ENCODE measurements at regions of chr7 and their contacts with region 1.

Region 1: GRCh38 chr7:151448261-151449252 is 8.6 kb upstream of the CRYGN start:
- DNase-seq: peak; percentile 67 to 87 (median 83)
- ATAC-seq: peak; percentile 92
- H3K4me3 ChIP-seq: peak overlapping the region; percentile 68
- H3K4me3 Mint-ChIP-seq: peak overlapping the region; percentile 69 to 88 (median 80)
- H3K27ac ChIP-seq: peak overlapping the region; percentile 64
- H3K27ac Mint-ChIP-seq: peak overlapping the region in 6 of 9 donors; percentile 28 to 88 (median 42)
- H3K4me1 ChIP-seq: peaks cover 0 to 3% of the 10 kb centered on the region in 2 donors
- H3K4me1 Mint-ChIP-seq: peaks cover 0 to 32% (median 8%) of the 10 kb centered on the region in 7 donors
- H3K27me3 ChIP-seq: no peaks in the 10 kb centered on the region
- H3K27me3 Mint-ChIP-seq: peaks cover 0 to 23% (median 4%) of the 10 kb centered on the region in 5 donors

Region 2: DNA sequence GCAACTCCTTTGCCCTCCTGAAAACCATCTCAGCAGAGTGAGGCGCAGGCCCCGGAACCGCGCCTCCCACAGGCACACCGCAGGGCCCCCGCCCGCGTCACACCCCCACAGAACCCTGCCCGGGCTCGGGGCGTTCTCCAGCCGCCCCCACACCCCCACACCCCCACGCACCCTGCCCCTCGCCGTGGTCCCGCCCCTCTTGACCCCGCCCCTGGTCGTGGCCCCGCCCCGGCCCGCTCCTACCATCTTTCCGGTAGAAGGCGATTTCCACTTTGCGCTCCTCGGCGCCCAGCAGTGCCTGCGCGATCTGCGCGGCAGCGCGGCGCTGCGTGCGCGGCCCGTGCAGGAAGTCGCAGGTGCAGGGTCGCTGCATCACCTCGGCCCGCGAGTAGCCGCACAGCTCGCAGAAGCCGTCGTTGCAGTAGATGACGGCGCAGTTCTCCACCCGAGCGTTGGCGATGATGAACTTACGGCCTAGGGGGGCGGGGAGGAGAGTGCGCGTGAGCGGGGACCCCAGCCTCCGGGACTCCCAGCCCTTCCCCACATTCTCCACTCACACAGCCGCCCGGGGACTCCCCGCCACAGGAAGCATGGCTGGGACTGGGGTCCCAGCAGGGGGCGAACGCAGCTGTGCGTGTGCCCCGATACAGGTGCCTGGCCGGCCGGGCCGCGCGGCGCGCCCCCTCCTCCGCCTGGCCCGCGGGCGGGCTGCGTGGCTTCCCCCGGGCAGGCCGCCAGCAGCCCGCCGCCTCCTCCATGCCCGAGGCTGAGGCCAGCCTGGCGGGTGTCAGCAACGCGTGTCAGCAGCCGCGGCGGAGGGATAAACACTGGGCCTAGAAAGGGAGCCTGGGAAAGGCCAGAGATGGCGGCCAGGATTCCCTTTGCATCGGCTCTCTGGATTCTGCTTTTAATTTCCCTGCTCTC is 473.8 kb before region 1 on chr7:
- CTCF ChIA-PET with region 1: no interaction called
- POLR2A ChIA-PET with region 1: no interaction called
- intact Hi-C with region 1: no loop called
- DNase-seq: peak; percentile 63 to 84 (median 80)
- ATAC-seq: peak; percentile 85
- H3K4me3 ChIP-seq: peak overlapping the region; percentile 63
- H3K4me3 Mint-ChIP-seq: peak overlapping the region; percentile 85 to 92 (median 88)
- H3K27ac ChIP-seq: peak overlapping the region; percentile 73
- H3K27ac Mint-ChIP-seq: peak overlapping the region; percentile 59 to 97 (median 95)
- H3K4me1 ChIP-seq: peaks cover 20 to 47% of the 10 kb centered on the region in 2 donors
- H3K4me1 Mint-ChIP-seq: peaks cover 33 to 62% (median 55%) of the 10 kb centered on the region in 7 donors
- H3K27me3 ChIP-seq: peaks cover 7 to 13% of the 10 kb centered on the region in 2 donors
- H3K27me3 Mint-ChIP-seq: peaks cover 9 to 36% (median 25%) of the 10 kb centered on the region in 5 donors

Region 3: GRCh38 chr7:151315038-151315655 is 133.4 kb before region 1 on chr7:
- CTCF ChIA-PET with region 1: interaction called, 45 read pairs
- POLR2A ChIA-PET with region 1: interaction called, 5 read pairs
- intact Hi-C with region 1: loop called (anchors 1 kb)
- DNase-seq: peak; percentile 48 to 87 (median 82)
- ATAC-seq: peak; percentile 96
- H3K4me3 ChIP-seq: no peak overlapping the region
- H3K4me3 Mint-ChIP-seq: peak overlapping the region in 8 of 10 donors; percentile 1 to 80 (median 56)
- H3K27ac ChIP-seq: no peak overlapping the region
- H3K27ac Mint-ChIP-seq: peak overlapping the region in 6 of 9 donors; percentile 33 to 81 (median 58)
- H3K4me1 ChIP-seq: no peaks in the 10 kb centered on the region
- H3K4me1 Mint-ChIP-seq: peaks cover 0 to 11% (median 5%) of the 10 kb centered on the region in 7 donors
- H3K27me3 ChIP-seq: no peaks in the 10 kb centered on the region
- H3K27me3 Mint-ChIP-seq: no peaks in the 10 kb centered on the region

Region 4: GRCh38 chr7:151368136-151368571 is 80.4 kb before region 1 on chr7:
- CTCF ChIA-PET with region 1: interaction called, 130 read pairs
- POLR2A ChIA-PET with region 1: interaction called, 6 read pairs
- intact Hi-C with region 1: loop called (anchors 1 kb)
- DNase-seq: peak; percentile 55 to 80 (median 69)
- ATAC-seq: peak; percentile 99
- H3K4me3 ChIP-seq: no peak overlapping the region
- H3K4me3 Mint-ChIP-seq: no peak overlapping the region
- H3K27ac ChIP-seq: no peak overlapping the region
- H3K27ac Mint-ChIP-seq: peak overlapping the region in 2 of 9 donors; percentile 46 to 56
- H3K4me1 ChIP-seq: peaks cover 0 to 4% of the 10 kb centered on the region in 2 donors
- H3K4me1 Mint-ChIP-seq: peaks cover 3 to 29% (median 12%) of the 10 kb centered on the region in 7 donors
- H3K27me3 ChIP-seq: no peaks in the 10 kb centered on the region
- H3K27me3 Mint-ChIP-seq: no peaks in the 10 kb centered on the region

Region 5: GRCh38 chr7:151408839-151409666 is 39.5 kb before region 1 on chr7:
- CTCF ChIA-PET with region 1: no interaction called
- POLR2A ChIA-PET with region 1: no interaction called
- intact Hi-C with region 1: loop called (anchors 2 to 5 kb)
- DNase-seq: peak in 8 of 9 donors; percentile 23 to 71 (median 64)
- ATAC-seq: peak; percentile 88
- H3K4me3 ChIP-seq: peak overlapping the region; percentile 51
- H3K4me3 Mint-ChIP-seq: peak overlapping the region; percentile 67 to 88 (median 78)
- H3K27ac ChIP-seq: no peak overlapping the region
- H3K27ac Mint-ChIP-seq: peak overlapping the region in 6 of 9 donors; percentile 8 to 81 (median 52)
- H3K4me1 ChIP-seq: peaks cover 11 to 24% of the 10 kb centered on the region in 2 donors
- H3K4me1 Mint-ChIP-seq: peaks cover 11 to 24% (median 15%) of the 10 kb centered on the region in 7 donors
- H3K27me3 ChIP-seq: peaks cover 0 to 8% of the 10 kb centered on the region in 2 donors
- H3K27me3 Mint-ChIP-seq: peaks cover 19 to 63% (median 27%) of the 10 kb centered on the region in 5 donors

Region 6: GRCh38 chr7:151648429-151648828 is 199.9 kb after region 1 on chr7:
- CTCF ChIA-PET with region 1: no interaction called
- POLR2A ChIA-PET with region 1: no interaction called
- intact Hi-C with region 1: no loop called
- DNase-seq: no peak
- ATAC-seq: no peak
- H3K4me3 ChIP-seq: no peak overlapping the region
- H3K4me3 Mint-ChIP-seq: no peak overlapping the region
- H3K27ac ChIP-seq: no peak overlapping the region
- H3K27ac Mint-ChIP-seq: no peak overlapping the region
- H3K4me1 ChIP-seq: no peaks in the 10 kb centered on the region
- H3K4me1 Mint-ChIP-seq: peaks cover 0 to 6% (median 0%) of the 10 kb centered on the region in 7 donors
- H3K27me3 ChIP-seq: no peaks in the 10 kb centered on the region
- H3K27me3 Mint-ChIP-seq: no peaks in the 10 kb centered on the region

Region 7: GRCh38 chr7:151759591-151760042 is 311.1 kb after region 1 on chr7:
- CTCF ChIA-PET with region 1: no interaction called
- POLR2A ChIA-PET with region 1: no interaction called
- intact Hi-C with region 1: loop called (anchors 1 to 2 kb)
- DNase-seq: peak in 8 of 9 donors; percentile 38 to 67 (median 58)
- ATAC-seq: peak; percentile 67
- H3K4me3 ChIP-seq: no peak overlapping the region
- H3K4me3 Mint-ChIP-seq: no peak overlapping the region
- H3K27ac ChIP-seq: no peak overlapping the region
- H3K27ac Mint-ChIP-seq: peak overlapping the region in 6 of 9 donors; percentile 8 to 83 (median 56)
- H3K4me1 ChIP-seq: peaks cover 12 to 22% of the 10 kb centered on the region in 2 donors
- H3K4me1 Mint-ChIP-seq: peaks cover 17 to 60% (median 33%) of the 10 kb centered on the region in 7 donors
- H3K27me3 ChIP-seq: no peaks in the 10 kb centered on the region
- H3K27me3 Mint-ChIP-seq: no peaks in the 10 kb centered on the region